ENCODE measurements at regions of chr6 and their contacts with region 1.

Region 1: GRCh38 chr6:34414999-34415858 is 10.6 kb downstream of the RPS10 start:
- DNase-seq: peak; percentile 86

Region 2: DNA sequence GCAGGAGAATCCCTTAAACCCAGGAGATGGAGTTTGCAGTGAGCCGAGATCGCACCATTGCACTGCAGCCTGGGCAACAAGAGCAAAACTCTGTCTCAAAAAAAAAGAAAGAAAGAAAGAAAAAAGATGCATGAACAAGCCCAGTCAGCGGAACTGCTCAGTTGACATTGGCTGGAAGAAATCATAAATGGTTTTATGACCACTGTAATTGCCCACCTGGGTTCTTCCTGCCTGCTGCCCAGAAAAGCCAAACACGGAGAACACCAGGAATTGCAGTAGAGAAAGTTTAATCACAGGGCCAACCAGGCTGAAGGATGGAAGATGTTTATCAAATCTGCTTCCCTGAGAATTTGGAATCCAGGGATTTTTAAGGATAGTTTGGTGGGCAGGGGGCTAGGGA is 857.9 kb before region 1 on chr6:
- in situ Hi-C with region 1: no loop called
- DNase-seq: no peak

Region 3: GRCh38 chr6:34248727-34249551 is 166.3 kb before region 1 on chr6 and contains the start of gene SMIM29:
- in situ Hi-C with region 1: loop called (anchors 25 kb)
- DNase-seq: peak; percentile 89

Region 4: GRCh38 chr6:34656378-34657036 is 241.3 kb after region 1 on chr6:
- in situ Hi-C with region 1: no loop called
- DNase-seq: peak; percentile 18

Region 5: GRCh38 chr6:34745277-34746103 is 330.3 kb after region 1 on chr6:
- in situ Hi-C with region 1: no loop called
- DNase-seq: peak; percentile 9

Measured in KBM-7 (cell line).